ENCODE measurements at regions of chr16 and their contacts with region 1.

Region 1: DNA sequence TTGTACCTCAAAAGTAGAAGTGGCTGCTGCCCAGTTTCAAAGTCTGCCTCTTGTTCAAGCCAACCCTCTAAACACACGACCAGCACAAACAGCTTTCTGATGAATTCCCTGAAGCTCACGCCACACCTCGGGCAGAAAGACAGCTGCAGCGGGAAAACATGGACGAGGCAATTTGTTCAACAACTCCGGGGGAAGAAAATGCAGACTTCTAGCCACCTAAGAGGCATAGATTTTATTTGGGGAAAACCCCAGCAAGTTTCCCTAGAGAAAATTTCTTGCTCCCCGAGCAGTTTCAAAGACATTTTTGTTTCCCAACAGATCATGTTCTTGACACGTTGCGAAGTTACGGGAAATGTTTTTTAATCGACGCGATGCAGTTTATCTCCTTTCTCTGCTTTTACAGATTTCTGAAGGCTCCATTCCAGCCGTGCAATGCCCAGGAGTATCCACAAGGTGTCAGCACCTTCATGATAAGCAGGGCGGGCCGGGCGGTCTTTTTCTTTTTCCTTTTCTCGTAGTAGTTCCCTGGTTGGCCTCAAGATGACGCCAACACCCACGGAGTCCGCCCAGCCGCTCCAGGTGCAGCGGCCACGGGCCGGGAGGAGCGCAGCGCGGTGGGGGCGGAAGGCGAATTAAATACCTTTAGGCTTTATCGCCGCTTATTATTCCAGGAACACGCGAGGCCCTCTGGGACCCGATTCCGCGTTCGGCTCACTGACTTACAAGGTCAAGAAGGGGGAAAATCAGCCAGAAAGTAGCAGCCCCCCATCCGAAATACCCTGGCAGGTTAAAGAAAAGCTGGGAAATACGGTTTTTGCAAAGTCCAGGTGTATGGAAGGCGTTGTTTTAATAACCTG is 2.9 kb upstream of the FOXC2 start:
- DNase-seq: peak; percentile 81
- ATAC-seq: peak; percentile 83
- H3K4me3 ChIP-seq: no peak overlapping the region
- H3K27ac ChIP-seq: no peak overlapping the region
- H3K4me1 ChIP-seq: no peaks in the 10 kb centered on the region
- H3K27me3 ChIP-seq: peaks cover 11 to 48% of the 10 kb centered on the region in 2 experiments
- CTCF ChIP-seq: peak; percentile 99
- EP300 ChIP-seq: no peak
- POLR2A ChIP-seq: no peak
- RAD21 ChIP-seq: peak; percentile 100

Region 2: GRCh38 chr16:86761111-86762031 is 197.7 kb after region 1 on chr16:
- CTCF ChIA-PET with region 1: interaction called, 12 read pairs
- POLR2A ChIA-PET with region 1: no interaction called
- in situ Hi-C with region 1: no loop called
- intact Hi-C with region 1: no loop called
- DNase-seq: peak; percentile 22
- ATAC-seq: peak; percentile 91
- H3K4me3 ChIP-seq: no peak overlapping the region
- H3K27ac ChIP-seq: no peak overlapping the region
- H3K4me1 ChIP-seq: no peaks in the 10 kb centered on the region
- H3K27me3 ChIP-seq: peaks cover 6 to 61% of the 10 kb centered on the region in 2 experiments; a peak in 4 of 5 replicates
- CTCF ChIP-seq: peak; percentile 60
- EP300 ChIP-seq: no peak
- POLR2A ChIP-seq: no peak
- RAD21 ChIP-seq: no peak

Region 3: GRCh38 chr16:87062569-87063442 is 499.1 kb after region 1 on chr16:
- CTCF ChIA-PET with region 1: interaction called, 86 read pairs
- POLR2A ChIA-PET with region 1: no interaction called
- in situ Hi-C with region 1: loop called (anchors 5 kb)
- intact Hi-C with region 1: loop called (anchors 1 kb)
- DNase-seq: peak; percentile 49
- ATAC-seq: peak; percentile 91
- H3K4me3 ChIP-seq: no peak overlapping the region
- H3K27ac ChIP-seq: no peak overlapping the region
- H3K4me1 ChIP-seq: no peaks in the 10 kb centered on the region
- H3K27me3 ChIP-seq: peaks cover 2 to 45% of the 10 kb centered on the region in 2 experiments; a peak in 3 of 5 replicates
- CTCF ChIP-seq: peak; percentile 80
- EP300 ChIP-seq: no peak
- POLR2A ChIP-seq: no peak
- RAD21 ChIP-seq: peak; percentile 61; the same call in 1 of the 2 replicates

Region 4: GRCh38 chr16:87190288-87191230 is 626.8 kb after region 1 on chr16:
- CTCF ChIA-PET with region 1: no interaction called
- POLR2A ChIA-PET with region 1: no interaction called
- in situ Hi-C with region 1: loop called (anchors 10 kb)
- intact Hi-C with region 1: no loop called
- DNase-seq: no peak
- ATAC-seq: no peak
- H3K4me3 ChIP-seq: no peak overlapping the region
- H3K27ac ChIP-seq: no peak overlapping the region
- H3K4me1 ChIP-seq: no peaks in the 10 kb centered on the region
- H3K27me3 ChIP-seq: peaks cover 1 to 15% of the 10 kb centered on the region in 2 experiments; a peak in 3 of 5 replicates
- CTCF ChIP-seq: no peak
- EP300 ChIP-seq: no peak
- POLR2A ChIP-seq: no peak
- RAD21 ChIP-seq: no peak

Region 5: DNA sequence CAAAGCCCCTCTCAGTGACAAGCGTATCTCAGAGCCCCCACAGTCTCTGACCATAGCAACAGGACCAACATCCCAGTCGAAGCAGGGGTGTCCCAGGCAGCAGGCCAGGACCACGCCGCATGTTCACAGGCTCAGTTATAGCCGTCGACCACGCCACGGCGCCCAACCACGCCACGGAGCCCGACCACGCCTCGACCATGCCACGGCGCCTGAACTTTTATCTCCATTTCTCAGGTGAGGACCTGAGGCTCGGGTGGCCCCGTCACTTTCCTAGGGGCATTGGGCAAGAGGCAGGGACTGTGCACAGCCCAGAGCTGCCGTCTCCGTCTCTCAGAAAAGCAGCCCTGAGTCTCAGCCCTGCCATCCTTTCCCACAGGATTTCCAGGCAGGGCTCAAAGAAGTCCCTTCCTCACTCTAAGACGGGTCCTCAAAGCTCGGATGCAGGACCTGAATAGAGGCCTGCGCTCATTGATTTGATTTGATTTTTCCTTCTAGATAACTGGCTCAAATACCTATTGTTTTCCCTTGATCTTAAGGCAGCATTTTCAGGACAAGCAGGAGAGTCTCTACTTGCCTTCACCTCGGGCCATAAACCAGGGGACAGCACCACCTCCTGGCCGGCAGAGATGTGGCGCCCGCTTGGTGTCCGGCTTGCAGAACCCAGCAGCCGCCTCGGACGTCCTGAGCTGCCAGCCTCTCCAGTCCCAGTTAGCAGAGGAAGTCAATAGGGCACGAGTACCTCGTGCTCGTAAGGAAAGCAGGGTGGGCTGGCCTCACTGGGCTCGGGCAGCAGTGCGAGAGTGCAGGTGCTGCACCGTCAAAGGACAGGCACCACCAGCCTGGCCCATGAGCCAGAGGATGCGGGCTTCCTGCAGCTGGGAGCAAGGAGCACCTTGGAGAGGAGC is 714.7 kb after region 1 on chr16:
- CTCF ChIA-PET with region 1: interaction called, 29 read pairs
- POLR2A ChIA-PET with region 1: no interaction called
- in situ Hi-C with region 1: loop called (anchors 10 kb)
- intact Hi-C with region 1: loop called (anchors 1 kb)
- DNase-seq: peak; percentile 62
- ATAC-seq: peak; percentile 99
- H3K4me3 ChIP-seq: no peak overlapping the region
- H3K27ac ChIP-seq: no peak overlapping the region
- H3K4me1 ChIP-seq: no peaks in the 10 kb centered on the region
- H3K27me3 ChIP-seq: no peaks in the 10 kb centered on the region
- CTCF ChIP-seq: peak; percentile 100
- EP300 ChIP-seq: no peak
- POLR2A ChIP-seq: no peak
- RAD21 ChIP-seq: peak; percentile 97

Measured in HepG2 (cell line).